ENCODE measurements at regions of chr3 and their contacts with region 1.

Region 1: GRCh38 chr3:40317061-40317855 is 7.8 kb downstream of the EIF1B start:
- DNase-seq: peak; percentile 40 to 69 (median 58)
- ATAC-seq: peak; percentile 55
- H3K4me3 ChIP-seq: no peak overlapping the region
- H3K27ac ChIP-seq: no peak overlapping the region
- H3K4me1 ChIP-seq: peaks cover 25% of the 10 kb centered on the region
- H3K27me3 ChIP-seq: no peaks in the 10 kb centered on the region
- CTCF ChIP-seq: peak; percentile 69 to 85 (median 79)
- POLR2A ChIP-seq: no peak

Region 2: GRCh38 chr3:39937874-39938273 is 379.4 kb before region 1 on chr3:
- intact Hi-C with region 1: no loop called
- DNase-seq: peak in 2 of 4 donors; percentile 16 to 27
- ATAC-seq: peak; percentile 67
- H3K4me3 ChIP-seq: no peak overlapping the region
- H3K27ac ChIP-seq: peak overlapping the region in 3 of 4 donors; percentile 49 to 73 (median 62)
- H3K4me1 ChIP-seq: peaks cover 75% of the 10 kb centered on the region
- H3K27me3 ChIP-seq: no peaks in the 10 kb centered on the region
- CTCF ChIP-seq: no peak
- POLR2A ChIP-seq: no peak

Region 3: DNA sequence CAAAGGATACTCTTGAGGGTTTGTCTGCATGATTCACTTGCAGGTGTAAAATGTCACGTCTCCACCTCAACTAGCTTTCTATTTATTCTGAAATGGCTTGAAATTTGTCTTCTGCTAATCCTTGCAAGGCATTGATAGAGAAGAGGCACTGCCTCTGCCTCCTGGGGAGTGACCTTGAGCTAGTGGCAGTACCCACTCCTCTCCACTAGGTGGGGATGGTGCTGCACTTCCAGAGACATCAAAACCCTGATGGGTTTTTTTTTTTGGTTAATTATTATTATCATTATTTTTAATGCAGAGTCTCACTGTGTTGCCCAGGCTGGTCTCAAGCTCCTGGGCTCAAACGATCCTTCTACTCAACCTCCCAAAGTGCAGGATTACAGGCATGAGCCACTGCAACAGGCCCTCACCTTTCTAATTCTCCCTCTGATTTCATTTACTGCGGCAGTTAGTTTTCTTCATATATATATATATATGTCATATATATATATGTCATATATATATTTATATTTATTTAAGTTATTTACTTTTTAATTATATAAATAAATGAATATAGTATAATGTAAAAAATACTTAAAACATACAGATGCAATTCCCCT is 125.3 kb before region 1 on chr3:
- intact Hi-C with region 1: loop called (anchors 10 kb)
- DNase-seq: peak; percentile 62 to 75 (median 69)
- ATAC-seq: peak; percentile 73
- H3K4me3 ChIP-seq: no peak overlapping the region
- H3K27ac ChIP-seq: no peak overlapping the region
- H3K4me1 ChIP-seq: peaks cover 3% of the 10 kb centered on the region
- H3K27me3 ChIP-seq: no peaks in the 10 kb centered on the region
- CTCF ChIP-seq: peak; percentile 58 to 94 (median 73)
- POLR2A ChIP-seq: no peak

Region 4: DNA sequence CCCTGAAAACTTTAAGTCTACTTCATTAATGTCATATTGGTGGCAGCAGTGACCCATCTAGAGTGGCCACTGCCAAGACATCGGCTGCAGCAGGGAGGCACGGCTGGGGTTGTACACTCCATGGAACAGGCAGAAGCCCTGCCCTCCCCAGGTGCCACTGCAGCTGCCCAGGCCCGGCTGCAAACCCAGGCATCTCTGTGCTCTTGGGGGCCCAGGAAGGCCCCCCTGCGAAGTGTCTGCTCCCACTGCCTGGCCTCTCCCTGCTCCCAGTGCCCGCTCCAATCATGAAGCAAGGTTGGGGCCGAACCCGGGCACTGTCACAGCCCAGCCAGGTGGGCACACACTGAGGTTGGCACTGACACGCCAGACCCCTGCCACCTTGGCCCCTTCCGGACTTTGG is 127.8 kb after region 1 on chr3:
- intact Hi-C with region 1: loop called (anchors 10 kb)
- DNase-seq: no peak
- ATAC-seq: no peak
- H3K4me3 ChIP-seq: no peak overlapping the region
- H3K27ac ChIP-seq: no peak overlapping the region
- H3K4me1 ChIP-seq: no peaks in the 10 kb centered on the region
- H3K27me3 ChIP-seq: no peaks in the 10 kb centered on the region
- CTCF ChIP-seq: no peak
- POLR2A ChIP-seq: no peak